ENCODE measurements at regions of chr1 and their contacts with region 1.

Region 1: GRCh38 chr1:117605774-117606648 is at the start of gene TENT5C:
- DNase-seq: peak; percentile 99
- H3K4me3 Mint-ChIP-seq: peak within 1 kb of the TSS; percentile 90
- H3K27ac Mint-ChIP-seq: peak within 1 kb of the TSS; percentile 89
- H3K4me1 Mint-ChIP-seq: peaks cover 47% of the 10 kb centered on the region
- H3K27me3 Mint-ChIP-seq: peaks cover 39% of the 10 kb centered on the region
- total RNA-seq, gene TENT5C: 3.1 and 3.5 TPM in 2 replicates

Region 2: GRCh38 chr1:117077267-117077666 is 528.7 kb before region 1 on chr1:
- intact Hi-C with region 1: loop called (anchors 5 kb)
- DNase-seq: no peak
- H3K4me3 Mint-ChIP-seq: no peak overlapping the region
- H3K27ac Mint-ChIP-seq: peak overlapping the region; percentile 91
- H3K4me1 Mint-ChIP-seq: peaks cover 17% of the 10 kb centered on the region
- H3K27me3 Mint-ChIP-seq: no peaks in the 10 kb centered on the region

Region 3: DNA sequence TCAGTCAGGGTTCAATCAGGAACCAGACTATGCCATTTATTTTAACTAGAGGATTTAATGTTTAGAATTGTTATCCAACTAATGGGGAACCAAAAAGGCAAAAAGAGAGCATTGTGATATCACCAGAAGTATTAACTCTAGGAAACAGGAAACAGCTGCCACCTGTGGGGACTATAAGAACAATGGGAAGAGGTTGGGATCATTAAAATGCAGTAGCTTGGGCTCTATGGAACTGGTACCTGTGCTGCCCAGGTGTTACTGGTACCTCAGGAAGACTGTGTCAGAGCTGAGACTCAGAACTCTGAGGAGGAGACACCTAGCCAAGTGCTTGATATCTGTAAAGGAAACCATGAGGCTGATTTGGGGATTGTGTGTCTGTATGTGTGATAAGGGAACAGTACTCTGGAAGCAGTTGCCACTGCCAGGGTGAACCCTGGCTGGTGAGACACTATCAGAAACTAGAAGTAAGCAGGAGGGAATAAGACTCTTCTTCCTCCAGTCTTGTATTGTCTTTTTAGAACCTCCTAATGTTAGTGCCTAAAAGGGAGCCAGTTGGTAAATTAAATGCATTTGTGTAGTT is 189.4 kb before region 1 on chr1:
- intact Hi-C with region 1: no loop called
- DNase-seq: no peak
- H3K4me3 Mint-ChIP-seq: no peak overlapping the region
- H3K27ac Mint-ChIP-seq: no peak overlapping the region
- H3K4me1 Mint-ChIP-seq: peaks cover 3% of the 10 kb centered on the region
- H3K27me3 Mint-ChIP-seq: no peaks in the 10 kb centered on the region

Region 4: DNA sequence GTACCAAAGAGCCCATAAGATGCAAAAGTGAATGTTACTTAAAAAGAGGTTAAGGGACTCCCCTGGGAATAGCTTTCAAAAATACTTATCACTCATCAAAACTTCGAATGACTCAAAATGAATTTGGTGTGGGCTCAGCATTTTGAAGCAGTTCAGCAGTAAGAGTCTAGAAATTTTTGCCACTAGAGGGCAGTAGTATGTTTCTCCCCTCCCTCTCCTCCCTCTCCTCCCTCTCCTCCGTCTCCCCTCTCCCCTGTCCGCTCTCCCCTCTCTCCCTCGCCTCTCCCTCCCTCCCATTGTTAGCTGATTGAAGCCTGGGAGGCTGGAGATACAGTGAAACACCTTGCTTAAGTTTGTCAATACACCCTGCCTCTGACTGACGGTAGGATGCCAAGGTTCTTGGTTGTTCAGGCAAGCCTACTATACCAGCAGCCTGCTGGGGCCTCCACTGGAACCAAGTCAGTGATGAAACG is 71.0 kb before region 1 on chr1:
- intact Hi-C with region 1: loop called (anchors 1 kb)
- DNase-seq: peak; percentile 81
- H3K4me3 Mint-ChIP-seq: no peak overlapping the region
- H3K27ac Mint-ChIP-seq: peak overlapping the region; percentile 41
- H3K4me1 Mint-ChIP-seq: peaks cover 13% of the 10 kb centered on the region
- H3K27me3 Mint-ChIP-seq: no peaks in the 10 kb centered on the region

Region 5: DNA sequence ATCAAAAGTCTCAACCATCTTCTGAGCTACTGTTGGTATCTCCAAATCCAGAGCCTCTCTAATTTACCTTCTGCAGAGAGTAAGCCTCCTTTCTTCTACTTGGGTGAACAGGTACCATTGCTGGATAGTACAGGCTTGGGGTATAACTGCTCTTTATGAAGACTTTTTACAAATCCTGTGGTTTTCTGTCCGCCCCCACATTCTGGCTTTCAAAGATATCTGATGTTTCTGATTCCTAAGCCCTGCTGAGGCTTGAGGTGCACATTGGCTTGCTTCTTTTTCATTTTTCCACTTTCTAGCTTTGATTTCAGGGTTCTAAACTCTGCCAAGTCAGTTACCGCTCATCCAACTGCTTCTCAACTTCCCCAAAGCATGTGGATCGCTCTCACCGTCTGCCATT is 37.0 kb after region 1 on chr1:
- intact Hi-C with region 1: loop called (anchors 2 kb)
- DNase-seq: no peak
- H3K4me3 Mint-ChIP-seq: no peak overlapping the region
- H3K27ac Mint-ChIP-seq: no peak overlapping the region
- H3K4me1 Mint-ChIP-seq: peaks cover 4% of the 10 kb centered on the region
- H3K27me3 Mint-ChIP-seq: peaks cover 53% of the 10 kb centered on the region

Region 6: GRCh38 chr1:117664314-117664713 is 58.3 kb after region 1 on chr1:
- intact Hi-C with region 1: loop called (anchors 1 kb)
- DNase-seq: peak; percentile 92
- H3K4me3 Mint-ChIP-seq: peak overlapping the region; percentile 17
- H3K27ac Mint-ChIP-seq: peak overlapping the region; percentile 89
- H3K4me1 Mint-ChIP-seq: peaks cover 79% of the 10 kb centered on the region
- H3K27me3 Mint-ChIP-seq: peaks cover 9% of the 10 kb centered on the region

Region 7: DNA sequence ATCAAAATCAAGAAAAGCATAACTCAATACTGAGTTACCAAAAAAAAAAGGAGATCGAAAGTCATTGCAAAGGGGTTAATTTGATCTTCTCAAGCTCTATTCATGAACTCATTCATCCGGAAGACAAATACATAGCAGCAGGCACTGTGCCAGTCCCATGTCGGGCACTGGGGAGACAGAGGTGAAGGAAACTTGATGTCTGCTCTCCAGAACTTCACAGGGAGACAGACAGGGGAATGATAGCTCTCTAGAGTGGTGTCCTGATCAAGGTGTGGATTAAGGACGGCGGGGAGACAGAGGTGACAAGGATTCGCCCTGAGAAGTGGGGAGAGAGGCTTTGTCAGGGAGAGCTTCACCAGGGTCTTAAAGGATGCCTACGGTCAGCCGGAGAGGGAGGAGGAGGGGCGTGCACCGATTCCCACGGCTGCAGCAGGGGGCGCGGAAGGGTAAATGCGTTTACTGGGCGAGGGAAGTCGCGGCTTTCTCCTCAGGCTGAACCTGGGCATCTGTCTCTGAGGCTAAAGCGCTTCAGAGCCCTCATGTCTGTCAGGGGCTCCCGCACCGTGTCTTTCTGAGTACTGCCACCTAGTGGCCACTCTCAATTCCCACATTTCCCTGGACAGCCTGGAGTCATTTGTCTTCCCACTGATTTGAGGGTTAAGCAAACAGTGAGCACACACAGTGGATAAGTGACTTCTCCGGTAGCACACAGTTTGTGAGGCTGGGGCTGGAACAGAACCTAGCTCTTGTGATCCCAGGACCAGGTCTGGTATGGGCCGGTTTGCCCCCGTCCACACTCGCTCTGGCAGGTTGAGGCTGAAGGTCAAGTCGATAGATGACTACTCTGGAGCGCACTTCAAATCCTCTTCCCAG is 152.7 kb after region 1 on chr1:
- intact Hi-C with region 1: loop called (anchors 5 kb)
- DNase-seq: peak; percentile 90
- H3K4me3 Mint-ChIP-seq: peak overlapping the region; percentile 84
- H3K27ac Mint-ChIP-seq: no peak overlapping the region
- H3K4me1 Mint-ChIP-seq: peaks cover 8% of the 10 kb centered on the region
- H3K27me3 Mint-ChIP-seq: peaks cover 39% of the 10 kb centered on the region